SK-N-SH (cell line): ENCODE measurements at regions of chr20 and their contacts with region 1.

Region 1: DNA sequence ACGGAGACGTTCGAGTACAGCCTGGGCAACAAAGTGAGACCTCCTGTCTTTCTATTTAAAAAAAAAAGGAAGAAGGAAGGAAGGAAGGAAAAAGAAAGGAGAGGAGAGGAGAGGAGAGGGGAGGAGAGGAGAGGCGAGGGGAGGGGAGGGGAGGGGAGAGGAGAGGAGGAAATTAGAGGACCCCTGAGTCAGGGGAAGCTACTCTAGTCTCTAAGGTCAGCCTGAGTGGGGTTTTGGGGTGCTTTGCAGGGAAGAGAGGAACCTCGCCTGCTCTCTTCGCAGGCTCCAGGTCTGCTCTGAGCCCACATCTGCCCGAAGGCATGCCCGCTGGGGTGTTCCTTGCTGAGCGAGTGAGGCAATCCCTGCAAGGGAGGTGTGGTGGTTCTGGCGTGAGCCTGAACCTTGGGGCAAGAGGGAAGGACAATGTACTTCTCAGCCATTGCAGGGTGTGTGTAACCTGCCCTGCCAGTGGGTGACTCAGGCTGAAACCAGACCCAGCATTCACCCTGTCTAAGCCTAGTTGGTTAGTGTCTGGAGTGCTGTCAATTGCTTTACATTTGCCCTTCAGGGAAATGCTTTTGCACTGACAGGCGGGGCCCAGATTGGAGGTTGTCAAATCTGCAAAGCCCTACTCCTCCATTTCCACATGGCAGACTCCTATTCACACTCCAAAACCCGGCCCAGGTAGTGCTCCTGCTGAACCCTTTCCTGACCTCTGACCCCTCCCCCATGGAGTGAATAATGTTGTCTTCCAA is 15.3 kb upstream of the MMP9 start:
- DNase-seq: peak; percentile 40
- H3K4me3 ChIP-seq: no peak overlapping the region
- H3K27ac ChIP-seq: no peak overlapping the region
- H3K4me1 ChIP-seq: peaks cover 0 to 2% of the 10 kb centered on the region in 2 experiments; a peak in 2 of 4 replicates
- H3K27me3 ChIP-seq: no peaks in the 10 kb centered on the region; the same call in 1 of the 2 replicates
- CTCF ChIP-seq: no peak
- EP300 ChIP-seq: no peak
- RAD21 ChIP-seq: no peak

Region 2: DNA sequence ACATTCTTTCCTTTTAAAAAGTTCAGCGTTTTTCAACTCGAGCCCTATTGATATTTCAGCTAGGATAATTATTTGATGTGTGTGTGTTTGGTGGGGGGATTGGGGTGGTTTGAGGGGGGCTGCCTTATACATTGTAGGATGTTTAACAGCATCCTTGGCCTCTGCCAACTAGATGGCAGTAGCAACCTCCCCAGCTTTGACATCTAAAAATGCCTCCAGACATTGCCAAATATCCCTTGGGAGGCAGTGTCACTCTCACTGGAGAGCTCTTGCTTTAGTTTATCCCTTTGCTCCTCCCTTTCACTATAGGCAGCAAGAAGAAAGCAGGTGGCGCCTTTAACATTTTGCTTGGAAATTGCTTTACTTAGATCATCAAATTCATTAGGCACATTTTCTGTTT is 600.6 kb before region 1 on chr20:
- CTCF ChIA-PET with region 1: no interaction called
- POLR2A ChIA-PET with region 1: no interaction called
- DNase-seq: no peak
- H3K4me3 ChIP-seq: no peak overlapping the region
- H3K27ac ChIP-seq: no peak overlapping the region
- H3K4me1 ChIP-seq: no peaks in the 10 kb centered on the region
- H3K27me3 ChIP-seq: no peaks in the 10 kb centered on the region
- CTCF ChIP-seq: no peak
- EP300 ChIP-seq: no peak
- RAD21 ChIP-seq: no peak

Region 3: DNA sequence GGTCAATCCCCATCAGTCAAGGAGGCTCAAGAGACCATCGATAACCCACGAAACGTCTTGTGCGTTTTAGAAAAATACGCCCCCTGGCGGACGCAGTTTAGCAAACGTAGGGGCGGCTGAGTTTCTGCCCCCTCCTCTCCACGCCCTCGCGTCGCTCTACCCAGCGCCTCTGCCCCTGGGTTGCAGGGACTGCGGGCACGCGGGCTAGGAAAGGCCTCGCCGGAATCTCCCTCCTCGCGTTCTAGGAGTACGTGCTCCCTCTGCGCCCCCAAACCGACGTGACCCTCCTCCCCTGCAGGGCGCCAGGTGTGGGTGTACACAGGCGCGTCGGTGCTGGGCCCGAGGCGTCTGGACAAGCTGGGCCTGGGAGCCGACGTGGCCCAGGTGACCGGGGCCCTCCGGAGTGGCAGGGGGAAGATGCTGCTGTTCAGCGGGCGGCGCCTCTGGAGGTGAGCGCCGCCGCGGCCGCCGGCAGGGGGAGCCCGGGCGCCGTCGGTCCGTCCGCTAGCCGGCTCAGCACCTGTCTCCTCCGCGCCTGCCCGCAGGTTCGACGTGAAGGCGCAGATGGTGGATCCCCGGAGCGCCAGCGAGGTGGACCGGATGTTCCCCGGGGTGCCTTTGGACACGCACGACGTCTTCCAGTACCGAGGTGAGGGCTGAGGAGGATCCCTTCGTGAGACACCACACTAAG is 20.6 kb after region 1 on chr20:
- CTCF ChIA-PET with region 1: interaction called, 61 read pairs
- POLR2A ChIA-PET with region 1: interaction called, 4 read pairs
- DNase-seq: peak; percentile 84
- H3K4me3 ChIP-seq: peak overlapping the region in 1 of 2 experiments; percentile 41; a peak in 2 of 4 replicates
- H3K27ac ChIP-seq: no peak overlapping the region
- H3K4me1 ChIP-seq: peaks cover 0 to 6% of the 10 kb centered on the region in 2 experiments; a peak in 1 of 4 replicates
- H3K27me3 ChIP-seq: no peaks in the 10 kb centered on the region
- CTCF ChIP-seq: peak; percentile 67
- EP300 ChIP-seq: no peak
- RAD21 ChIP-seq: peak; percentile 57